ENCODE measurements at regions of chr16 and their contacts with region 1.

Region 1: DNA sequence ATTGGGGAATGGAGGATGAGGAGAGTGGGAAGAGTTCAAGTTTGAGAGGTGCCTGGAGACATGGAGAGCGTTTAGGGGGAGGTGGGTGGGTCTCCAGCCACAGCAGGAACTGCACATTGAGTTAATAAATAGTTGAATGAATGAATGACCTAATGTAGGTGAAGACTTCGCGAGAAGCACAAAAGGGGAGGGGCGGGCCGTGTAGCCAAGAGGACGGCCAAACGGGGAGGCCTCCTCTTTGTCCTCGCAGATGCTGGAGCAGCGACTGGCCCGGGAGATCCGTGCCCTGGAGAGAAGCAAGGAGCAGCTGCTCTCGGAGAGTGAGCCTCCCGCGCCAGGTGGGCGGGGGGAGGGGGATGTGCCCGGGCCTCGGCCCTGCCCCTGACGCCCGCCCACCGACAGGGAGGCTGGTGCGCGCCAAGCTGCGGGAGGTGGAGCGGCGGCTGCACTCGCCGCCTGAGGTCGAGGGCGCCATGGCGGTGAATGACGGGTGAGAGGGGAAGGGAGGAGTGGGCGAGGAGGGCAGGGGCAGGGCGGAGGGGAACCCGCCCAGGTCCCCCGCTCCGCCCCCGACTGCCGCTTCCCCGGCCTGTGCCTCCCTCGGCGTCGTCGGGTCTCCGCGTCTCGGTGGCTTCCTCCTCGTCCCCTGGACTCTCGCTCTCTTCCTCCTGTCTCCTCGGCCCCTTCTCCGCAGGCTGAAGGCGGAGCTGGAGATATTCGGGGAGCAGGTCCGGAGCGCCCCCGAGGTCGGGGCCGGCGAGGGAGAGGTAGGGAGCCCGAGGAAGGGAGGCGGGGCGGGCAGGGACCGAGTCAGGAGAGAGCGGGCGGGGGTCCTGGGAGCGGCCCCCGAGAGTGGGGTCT is 12.9 kb downstream of the SYCE1L start:
- DNase-seq: peak; percentile 92
- H3K4me3 Mint-ChIP-seq: peak overlapping the region; percentile 87
- H3K27ac Mint-ChIP-seq: peak overlapping the region; percentile 85
- H3K4me1 Mint-ChIP-seq: peaks cover 14% of the 10 kb centered on the region
- H3K27me3 Mint-ChIP-seq: no peaks in the 10 kb centered on the region

Region 2: GRCh38 chr16:77028655-77029054 is 183.5 kb before region 1 on chr16:
- intact Hi-C with region 1: no loop called
- DNase-seq: no peak
- H3K4me3 Mint-ChIP-seq: no peak overlapping the region
- H3K27ac Mint-ChIP-seq: no peak overlapping the region
- H3K4me1 Mint-ChIP-seq: no peaks in the 10 kb centered on the region
- H3K27me3 Mint-ChIP-seq: no peaks in the 10 kb centered on the region

Region 3: DNA sequence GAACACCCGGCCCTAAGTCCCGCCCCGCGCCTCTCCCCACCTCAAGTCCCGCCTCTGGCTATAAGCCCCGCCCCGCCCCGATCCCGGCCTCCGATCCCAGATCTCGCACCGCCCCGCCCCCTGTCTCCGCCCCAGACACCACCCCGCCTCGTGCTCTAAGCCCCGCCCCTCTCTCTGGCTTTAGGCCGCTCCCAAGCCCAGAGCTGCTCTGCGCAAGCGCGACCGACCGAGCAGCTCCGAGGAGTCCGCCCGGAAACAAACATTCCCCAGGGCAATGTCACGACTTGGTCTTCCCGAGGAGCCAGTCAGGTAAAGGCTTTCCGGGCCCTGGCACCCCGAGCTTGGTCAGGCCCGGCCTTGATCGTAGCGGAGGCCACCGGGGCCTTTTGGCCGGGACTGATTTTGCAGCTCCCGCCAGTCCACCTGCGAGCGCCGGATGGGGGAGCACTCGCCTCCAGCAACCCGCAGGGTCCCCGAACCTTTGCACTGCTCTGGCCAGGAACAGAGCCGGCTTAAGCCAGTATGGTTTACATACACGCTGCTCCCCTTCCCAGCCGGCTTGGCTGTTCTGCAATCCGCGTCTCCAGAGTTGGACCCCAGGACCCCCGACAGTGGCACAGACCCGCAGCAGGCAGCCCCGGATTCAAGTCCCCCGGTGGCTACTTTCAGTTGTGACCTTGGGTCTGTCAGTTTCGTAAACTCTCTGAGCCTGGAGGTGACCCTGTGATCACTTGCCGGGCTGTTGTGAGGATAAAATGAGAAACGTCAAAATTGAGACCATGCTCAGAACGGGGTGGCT is 510.4 kb after region 1 on chr16 and contains the start of gene NUDT7:
- intact Hi-C with region 1: loop called (anchors 5 kb)
- DNase-seq: peak; percentile 98
- H3K4me3 Mint-ChIP-seq: peak within 1 kb of the TSS; percentile 89
- H3K27ac Mint-ChIP-seq: peak within 1 kb of the TSS; percentile 71
- H3K4me1 Mint-ChIP-seq: peaks cover 11% of the 10 kb centered on the region
- H3K27me3 Mint-ChIP-seq: no peaks in the 10 kb centered on the region
- total RNA-seq, gene NUDT7: 4.0 TPM in 2 replicates